PC-3 (cell line): ENCODE measurements at regions of chr1 and their contacts with region 1.

Region 1: DNA sequence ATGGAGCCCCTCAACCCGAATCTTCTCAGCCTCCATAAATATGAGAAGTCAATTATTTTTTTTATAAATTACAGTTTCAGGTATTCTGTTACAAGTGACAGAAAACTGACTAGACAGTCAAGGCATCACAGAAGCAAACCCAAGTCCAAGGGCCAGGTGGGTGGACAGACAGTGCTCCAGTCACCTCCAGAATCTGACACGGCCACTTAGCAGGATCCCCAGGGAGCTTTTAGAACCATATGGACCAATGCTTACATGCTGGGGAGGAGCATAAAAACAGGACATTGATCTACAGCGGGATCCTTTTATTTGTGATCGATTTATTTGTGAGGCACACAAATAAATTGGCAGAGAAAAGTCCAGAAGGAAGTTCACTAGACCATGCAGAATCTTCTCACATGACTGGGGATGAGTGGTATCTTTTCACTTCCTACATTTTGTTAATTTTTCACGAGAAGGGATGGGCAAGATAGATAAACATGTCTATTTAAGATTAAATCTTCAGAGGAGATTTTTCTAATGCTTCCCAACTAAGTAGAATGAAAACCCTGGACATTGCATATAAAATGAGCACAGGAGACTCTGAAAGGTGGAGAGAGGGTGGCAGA is 15.0 kb downstream of the ZNF496 start:
- DNase-seq: no peak
- ATAC-seq: no peak; the same call in 1 of the 2 replicates
- H3K4me3 ChIP-seq: no peak overlapping the region
- H3K27ac ChIP-seq: peak overlapping the region; percentile 76
- H3K4me1 ChIP-seq: peaks cover 20% of the 10 kb centered on the region
- H3K27me3 ChIP-seq: no peaks in the 10 kb centered on the region
- CTCF ChIP-seq: no peak

Region 2: DNA sequence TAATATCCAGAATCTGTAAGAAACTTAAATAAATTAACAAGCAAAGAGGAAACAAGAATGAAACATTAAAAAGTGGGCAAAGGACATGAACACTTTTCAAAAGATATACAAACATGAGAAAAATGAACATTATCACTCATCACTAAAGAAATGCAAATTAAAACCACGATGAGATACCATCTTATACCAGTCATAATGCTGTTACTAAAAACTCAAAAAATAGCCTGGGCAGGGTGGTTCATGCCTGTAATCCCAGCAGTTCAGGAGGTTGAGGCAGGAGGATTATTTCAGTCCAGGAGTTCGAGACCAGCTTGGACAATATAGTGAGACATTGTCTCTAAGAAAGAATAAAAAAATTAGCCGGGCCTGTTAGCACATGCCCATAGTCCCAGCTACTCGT is 151.0 kb before region 1 on chr1:
- CTCF ChIA-PET with region 1: no interaction called
- POLR2A ChIA-PET with region 1: no interaction called
- intact Hi-C with region 1: loop called (anchors 5 kb)
- DNase-seq: no peak
- ATAC-seq: no peak
- H3K4me3 ChIP-seq: no peak overlapping the region
- H3K27ac ChIP-seq: no peak overlapping the region
- H3K4me1 ChIP-seq: no peaks in the 10 kb centered on the region
- H3K27me3 ChIP-seq: no peaks in the 10 kb centered on the region
- CTCF ChIP-seq: no peak

Region 3: DNA sequence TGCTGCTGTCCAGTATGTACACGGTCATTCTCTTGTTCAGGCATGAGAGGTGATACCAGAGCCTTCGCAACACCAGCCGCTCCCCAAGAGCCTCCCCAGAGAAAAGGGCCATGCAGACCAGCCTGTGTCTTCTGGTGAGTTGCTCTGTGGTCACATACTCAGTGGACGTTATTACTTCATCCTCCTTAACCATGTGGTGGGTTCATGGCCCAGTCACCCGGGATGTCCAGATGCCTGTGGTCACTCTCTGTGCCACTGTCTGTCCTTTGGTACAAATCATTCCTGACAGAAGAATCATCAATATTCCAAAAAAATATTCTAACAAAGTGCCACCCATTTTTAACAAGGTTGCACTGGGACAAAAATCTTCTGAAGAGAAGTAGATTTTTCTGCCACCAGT is 136.1 kb before region 1 on chr1:
- CTCF ChIA-PET with region 1: no interaction called
- POLR2A ChIA-PET with region 1: no interaction called
- intact Hi-C with region 1: no loop called
- DNase-seq: no peak
- ATAC-seq: no peak
- H3K4me3 ChIP-seq: no peak overlapping the region
- H3K27ac ChIP-seq: no peak overlapping the region
- H3K4me1 ChIP-seq: no peaks in the 10 kb centered on the region
- H3K27me3 ChIP-seq: no peaks in the 10 kb centered on the region
- CTCF ChIP-seq: no peak

Region 4: DNA sequence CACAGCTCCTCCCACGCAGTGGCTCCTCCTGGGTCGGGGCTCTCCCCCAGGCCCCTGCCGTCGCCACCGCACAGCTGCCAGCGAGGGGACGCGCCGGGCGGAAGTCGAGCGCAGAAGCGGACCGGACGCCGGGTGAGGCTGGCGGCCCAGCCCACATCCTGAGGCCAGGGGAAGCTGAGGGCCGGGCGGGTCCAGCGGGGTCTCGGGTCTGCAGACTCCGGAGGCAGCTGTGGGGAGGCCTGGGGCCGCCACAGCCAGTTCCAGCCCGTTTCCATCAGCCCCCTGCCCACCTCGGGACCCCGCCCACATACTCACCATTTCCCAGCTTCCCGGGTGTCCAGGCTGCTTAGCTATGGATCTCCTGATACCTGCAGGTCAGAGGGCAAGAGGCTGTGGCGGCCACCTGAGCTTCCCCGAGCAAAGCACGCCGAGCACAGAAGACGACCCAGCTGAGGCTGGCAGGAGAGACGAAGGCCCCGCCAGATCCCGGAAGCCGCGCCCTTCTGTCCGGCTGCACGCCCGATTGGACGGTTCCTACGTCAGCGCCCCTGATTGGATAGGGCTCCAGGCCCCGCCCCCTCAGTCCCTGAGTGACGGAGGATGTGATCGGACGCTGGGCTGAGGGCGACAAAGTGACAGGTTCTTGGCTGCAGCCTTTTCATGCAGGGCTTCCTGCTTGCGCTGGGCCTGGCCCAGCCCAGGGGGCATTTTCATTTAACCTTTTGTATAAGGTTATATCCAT is 106.1 kb before region 1 on chr1:
- CTCF ChIA-PET with region 1: no interaction called
- POLR2A ChIA-PET with region 1: no interaction called
- intact Hi-C with region 1: loop called (anchors 1 kb)
- DNase-seq: peak; percentile 100
- ATAC-seq: peak; percentile 98
- H3K4me3 ChIP-seq: peak overlapping the region; percentile 79
- H3K27ac ChIP-seq: peak overlapping the region; percentile 40
- H3K4me1 ChIP-seq: peaks cover 19% of the 10 kb centered on the region
- H3K27me3 ChIP-seq: no peaks in the 10 kb centered on the region
- CTCF ChIP-seq: no peak